Ovary (tissue), 10 donors: ENCODE measurements at regions of chr7 and their contacts with region 1.

Region 1: DNA sequence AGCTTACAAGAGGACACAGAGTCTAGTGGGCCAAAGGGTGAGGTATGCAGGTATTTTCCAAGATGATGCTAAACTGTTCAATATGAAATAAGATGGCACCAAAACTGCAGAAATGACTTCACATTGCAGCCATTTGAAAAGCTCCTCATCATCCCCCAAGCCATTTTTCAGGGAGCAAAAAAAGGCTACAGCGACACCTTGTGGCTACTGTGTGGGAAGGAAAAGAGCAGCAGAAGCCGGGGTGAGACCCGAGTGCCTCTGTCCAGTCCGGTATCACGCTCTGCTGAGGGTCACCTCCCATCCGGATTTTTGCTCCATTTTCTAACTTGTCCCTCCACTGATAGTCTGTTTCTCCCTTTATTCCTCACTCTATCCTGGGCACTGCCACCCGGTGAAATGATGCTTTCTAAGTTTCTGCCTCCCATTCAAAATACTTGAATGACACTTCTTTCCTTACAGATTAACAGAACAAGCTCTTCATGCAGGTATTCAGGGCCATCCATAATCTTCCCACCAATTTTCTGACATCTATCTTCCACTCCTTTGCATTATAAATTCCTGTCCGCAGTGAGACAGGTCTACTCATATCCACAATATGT is 220.2 kb downstream of the DGKI start:
- DNase-seq: no peak
- H3K4me3 ChIP-seq: no peak overlapping the region
- H3K27ac ChIP-seq: no peak overlapping the region
- H3K4me1 ChIP-seq: no peaks in the 10 kb centered on the region
- H3K27me3 ChIP-seq: no peaks in the 10 kb centered on the region
- CTCF ChIP-seq: no peak
- EP300 ChIP-seq: no peak
- POLR2A ChIP-seq: no peak

Region 2: GRCh38 chr7:137681657-137682562 is 55.3 kb after region 1 on chr7:
- intact Hi-C with region 1: no loop called
- DNase-seq: no peak
- H3K4me3 ChIP-seq: no peak overlapping the region
- H3K27ac ChIP-seq: no peak overlapping the region
- H3K4me1 ChIP-seq: no peaks in the 10 kb centered on the region
- H3K27me3 ChIP-seq: no peaks in the 10 kb centered on the region
- CTCF ChIP-seq: no peak
- EP300 ChIP-seq: no peak
- POLR2A ChIP-seq: no peak

Region 3: DNA sequence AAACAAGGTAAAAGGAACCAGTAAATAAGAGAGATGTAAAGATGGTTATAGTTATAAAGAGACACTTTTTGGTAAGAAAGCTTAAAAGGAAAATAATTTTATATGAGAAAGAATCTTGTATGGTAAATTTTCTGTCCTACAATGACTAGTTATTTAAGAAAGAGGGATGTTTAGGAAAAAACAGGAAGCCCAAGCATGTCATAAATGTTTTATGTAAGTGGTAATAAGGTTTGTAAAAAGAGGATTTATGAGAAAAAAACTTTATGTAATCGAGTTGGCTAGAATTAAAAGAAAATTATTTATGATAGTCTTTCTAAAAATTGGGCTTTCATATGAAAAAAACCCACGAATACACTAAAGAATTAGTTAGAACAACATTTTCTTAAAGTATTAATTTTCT is 409.6 kb after region 1 on chr7:
- intact Hi-C with region 1: loop called in 1 of 4 experiments (anchors 5 kb)
- DNase-seq: no peak
- H3K4me3 ChIP-seq: no peak overlapping the region
- H3K27ac ChIP-seq: no peak overlapping the region
- H3K4me1 ChIP-seq: no peaks in the 10 kb centered on the region
- H3K27me3 ChIP-seq: no peaks in the 10 kb centered on the region
- CTCF ChIP-seq: no peak
- EP300 ChIP-seq: no peak
- POLR2A ChIP-seq: no peak